Calu3 (cell line): ENCODE measurements at regions of chr4 and their contacts with region 1.

Region 1: GRCh38 chr4:20684852-20685763 is 15.2 kb upstream of the PACRGL start:
- DNase-seq: no peak
- H3K4me3 Mint-ChIP-seq: no peak overlapping the region
- H3K27ac Mint-ChIP-seq: no peak overlapping the region
- H3K4me1 Mint-ChIP-seq: no peaks in the 10 kb centered on the region
- H3K27me3 Mint-ChIP-seq: peaks cover 28% of the 10 kb centered on the region
- CTCF ChIP-seq: no peak

Region 2: GRCh38 chr4:20044502-20044911 is 640.6 kb before region 1 on chr4:
- CTCF ChIA-PET with region 1: no interaction called
- intact Hi-C with region 1: no loop called
- DNase-seq: no peak
- H3K4me3 Mint-ChIP-seq: no peak overlapping the region
- H3K27ac Mint-ChIP-seq: no peak overlapping the region
- H3K4me1 Mint-ChIP-seq: peaks cover 5% of the 10 kb centered on the region
- H3K27me3 Mint-ChIP-seq: no peaks in the 10 kb centered on the region
- CTCF ChIP-seq: no peak

Region 3: GRCh38 chr4:20313237-20314030 is 371.7 kb before region 1 on chr4:
- CTCF ChIA-PET with region 1: no interaction called
- intact Hi-C with region 1: loop called (anchors 5 kb)
- DNase-seq: no peak
- H3K4me3 Mint-ChIP-seq: no peak overlapping the region
- H3K27ac Mint-ChIP-seq: no peak overlapping the region
- H3K4me1 Mint-ChIP-seq: no peaks in the 10 kb centered on the region
- H3K27me3 Mint-ChIP-seq: no peaks in the 10 kb centered on the region
- CTCF ChIP-seq: no peak

Region 4: DNA sequence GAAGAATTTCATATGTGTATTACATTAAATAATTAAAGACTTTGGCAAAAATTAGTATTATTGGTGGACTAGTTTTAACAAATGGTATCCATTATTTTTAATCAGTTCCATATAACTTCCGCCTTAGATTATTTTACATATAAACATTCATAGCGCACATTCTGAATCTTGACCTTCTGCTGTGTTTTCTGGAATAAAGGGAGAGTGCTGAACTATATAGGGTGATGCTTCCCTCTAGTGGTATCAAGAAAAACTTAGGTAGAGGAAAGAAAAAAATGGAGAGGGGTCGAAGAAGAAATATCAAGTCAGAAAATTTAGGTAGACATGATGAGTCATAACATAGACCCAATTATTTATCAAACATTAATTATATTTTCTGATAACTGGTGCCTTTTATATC is 140.5 kb before region 1 on chr4:
- CTCF ChIA-PET with region 1: no interaction called
- intact Hi-C with region 1: loop called (anchors 2 kb)
- DNase-seq: no peak
- H3K4me3 Mint-ChIP-seq: no peak overlapping the region
- H3K27ac Mint-ChIP-seq: no peak overlapping the region
- H3K4me1 Mint-ChIP-seq: no peaks in the 10 kb centered on the region
- H3K27me3 Mint-ChIP-seq: no peaks in the 10 kb centered on the region
- CTCF ChIP-seq: no peak

Region 5: GRCh38 chr4:20672262-20672661 is 12.8 kb before region 1 on chr4:
- CTCF ChIA-PET with region 1: no interaction called
- intact Hi-C with region 1: no loop called
- DNase-seq: no peak
- H3K4me3 Mint-ChIP-seq: no peak overlapping the region
- H3K27ac Mint-ChIP-seq: no peak overlapping the region
- H3K4me1 Mint-ChIP-seq: no peaks in the 10 kb centered on the region
- H3K27me3 Mint-ChIP-seq: no peaks in the 10 kb centered on the region
- CTCF ChIP-seq: no peak